IMR-90 (cell line): ENCODE measurements at regions of chr3 and their contacts with region 1.

Region 1: GRCh38 chr3:152471814-152472671 is 203.3 kb downstream of the MBNL1 start:
- DNase-seq: peak; percentile 54
- ATAC-seq: peak; percentile 61; the same call in 1 of the 2 replicates
- H3K4me3 ChIP-seq: no peak overlapping the region
- H3K27ac ChIP-seq: no peak overlapping the region
- H3K4me1 ChIP-seq: no peaks in the 10 kb centered on the region
- H3K27me3 ChIP-seq: no peaks in the 10 kb centered on the region
- CTCF ChIP-seq: peak; percentile 67
- POLR2A ChIP-seq: no peak
- RAD21 ChIP-seq: peak; percentile 44

Region 2: GRCh38 chr3:152396867-152397266 is 75.2 kb before region 1 on chr3:
- CTCF ChIA-PET with region 1: no interaction called
- POLR2A ChIA-PET with region 1: no interaction called
- dilution Hi-C with region 1: no loop called
- in situ Hi-C with region 1: no loop called
- intact Hi-C with region 1: no loop called
- DNase-seq: no peak
- ATAC-seq: no peak
- H3K4me3 ChIP-seq: no peak overlapping the region
- H3K27ac ChIP-seq: no peak overlapping the region
- H3K4me1 ChIP-seq: peaks cover 15% of the 10 kb centered on the region
- H3K27me3 ChIP-seq: no peaks in the 10 kb centered on the region
- CTCF ChIP-seq: no peak
- POLR2A ChIP-seq: no peak
- RAD21 ChIP-seq: no peak

Region 3: DNA sequence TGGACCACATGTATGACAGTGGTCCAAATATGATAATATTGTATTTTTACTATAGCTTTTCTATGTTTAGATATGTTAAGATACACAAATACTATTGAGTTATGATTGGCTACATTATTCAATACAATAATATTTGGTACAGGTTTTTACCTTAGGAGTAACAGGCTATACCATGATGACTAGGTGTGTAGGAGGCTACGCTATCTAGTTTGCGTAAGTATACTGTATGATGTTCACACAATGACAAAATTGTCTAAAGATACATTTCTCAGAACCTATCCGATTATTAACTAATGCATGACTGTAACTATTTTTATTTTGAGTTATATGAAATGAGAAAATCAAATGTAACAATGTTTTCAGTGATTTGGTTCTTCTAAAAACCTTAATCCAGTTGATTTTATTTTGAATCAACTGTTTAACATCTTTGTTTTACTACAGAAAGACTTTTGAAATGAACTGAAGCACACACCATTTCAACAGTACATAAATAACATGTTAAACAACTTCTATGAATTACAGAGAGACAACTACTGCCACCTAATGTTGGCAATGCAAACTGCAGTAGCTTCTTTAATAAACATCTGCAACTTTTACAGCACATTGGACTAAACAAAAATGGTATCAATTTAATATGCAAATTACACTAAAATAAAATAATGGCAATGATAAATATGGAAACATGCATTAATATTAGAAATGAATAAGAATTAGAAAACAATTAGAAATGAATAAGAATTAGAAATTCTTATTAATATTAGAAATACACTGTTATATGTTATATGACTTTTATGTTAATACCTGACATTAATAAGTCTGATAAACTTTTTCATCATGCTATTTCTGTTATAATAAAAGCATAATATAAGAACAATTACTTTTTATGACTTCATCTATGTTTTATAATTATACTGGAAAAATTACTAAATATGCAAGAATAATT is 52.4 kb after region 1 on chr3:
- CTCF ChIA-PET with region 1: interaction called, 3 read pairs
- POLR2A ChIA-PET with region 1: no interaction called
- dilution Hi-C with region 1: no loop called
- in situ Hi-C with region 1: no loop called
- intact Hi-C with region 1: loop called (anchors 1 kb)
- DNase-seq: peak; percentile 62
- ATAC-seq: peak; percentile 77
- H3K4me3 ChIP-seq: no peak overlapping the region
- H3K27ac ChIP-seq: no peak overlapping the region
- H3K4me1 ChIP-seq: no peaks in the 10 kb centered on the region
- H3K27me3 ChIP-seq: no peaks in the 10 kb centered on the region
- CTCF ChIP-seq: peak; percentile 77
- POLR2A ChIP-seq: no peak
- RAD21 ChIP-seq: peak; percentile 70

Region 4: GRCh38 chr3:152574461-152575079 is 102.5 kb after region 1 on chr3:
- CTCF ChIA-PET with region 1: interaction called, 3 read pairs
- POLR2A ChIA-PET with region 1: no interaction called
- dilution Hi-C with region 1: no loop called
- in situ Hi-C with region 1: no loop called
- intact Hi-C with region 1: loop called (anchors 1 kb)
- DNase-seq: peak; percentile 51
- ATAC-seq: peak; percentile 85
- H3K4me3 ChIP-seq: no peak overlapping the region
- H3K27ac ChIP-seq: no peak overlapping the region
- H3K4me1 ChIP-seq: no peaks in the 10 kb centered on the region
- H3K27me3 ChIP-seq: peaks cover 3% of the 10 kb centered on the region; the same call in 1 of the 2 replicates
- CTCF ChIP-seq: peak; percentile 56
- POLR2A ChIP-seq: no peak
- RAD21 ChIP-seq: peak; percentile 67

Region 5: DNA sequence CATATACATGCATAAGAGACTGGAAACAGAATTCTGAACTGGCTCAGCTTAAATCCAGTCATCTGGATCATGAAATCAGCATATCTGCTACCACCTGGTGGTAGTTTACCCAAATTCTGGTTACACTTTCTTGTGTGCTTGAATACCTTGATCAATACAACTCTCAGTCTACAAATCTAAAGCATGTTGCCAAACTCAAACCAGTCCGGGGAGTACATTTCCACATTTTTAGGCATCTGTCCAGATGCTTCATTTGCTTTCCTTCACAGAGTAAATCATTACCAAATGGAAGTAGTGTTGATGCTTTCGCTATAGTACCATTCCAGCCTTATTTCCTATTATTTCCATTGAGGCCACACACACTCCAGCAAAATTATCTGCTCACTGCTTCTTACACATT is 489.3 kb after region 1 on chr3:
- CTCF ChIA-PET with region 1: no interaction called
- POLR2A ChIA-PET with region 1: no interaction called
- dilution Hi-C with region 1: no loop called
- in situ Hi-C with region 1: no loop called
- intact Hi-C with region 1: loop called (anchors 10 kb)
- DNase-seq: peak; percentile 0
- ATAC-seq: no peak
- H3K4me3 ChIP-seq: no peak overlapping the region
- H3K27ac ChIP-seq: no peak overlapping the region
- H3K4me1 ChIP-seq: no peaks in the 10 kb centered on the region
- H3K27me3 ChIP-seq: no peaks in the 10 kb centered on the region
- CTCF ChIP-seq: no peak
- POLR2A ChIP-seq: no peak
- RAD21 ChIP-seq: no peak